Ascending aorta (tissue), 2 donors: ENCODE measurements at regions of chr6 and their contacts with region 1.

Region 1: DNA sequence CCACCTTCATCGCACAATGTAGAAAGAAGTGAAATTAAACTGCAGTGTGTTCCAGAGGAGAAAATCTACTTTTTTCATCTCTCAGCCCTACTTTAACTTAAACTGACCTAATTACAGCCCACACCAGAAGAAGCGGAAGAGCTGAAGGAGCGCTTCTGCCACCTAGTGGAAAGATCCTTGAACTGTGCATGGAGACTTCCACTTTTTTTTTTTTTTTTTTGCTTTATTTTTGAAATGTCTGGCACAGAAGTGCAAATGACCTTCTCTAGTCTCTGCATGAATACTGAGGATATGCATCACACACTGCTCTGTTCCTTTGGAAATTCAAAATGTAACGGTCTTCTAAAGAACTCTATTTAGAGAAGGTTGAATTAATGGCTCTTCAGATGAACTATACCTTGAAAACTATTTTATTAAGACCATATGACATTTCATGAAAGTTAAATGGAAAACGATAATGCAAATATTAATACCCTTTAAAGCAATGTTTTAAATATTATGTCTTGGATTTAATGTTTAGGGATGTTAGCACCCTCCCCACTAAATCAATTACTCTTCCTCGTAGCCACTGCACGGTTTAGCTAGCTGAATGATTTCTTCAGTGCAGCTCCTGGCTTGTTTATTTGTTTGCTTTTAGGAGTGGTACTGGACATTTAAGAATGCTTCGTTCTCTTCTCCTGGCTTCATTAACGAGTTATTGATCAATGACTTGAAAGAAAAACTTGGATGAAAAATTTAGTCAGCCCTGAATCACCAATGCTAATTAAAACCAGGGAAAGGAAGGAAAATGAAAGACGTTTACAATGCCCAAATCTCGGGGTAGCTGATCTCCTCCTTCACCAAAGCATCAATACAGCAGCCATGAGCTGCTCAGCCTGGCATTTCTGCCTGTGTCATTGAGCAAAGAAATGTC is 569.6 kb upstream of the GJE1 start:
- DNase-seq: peak in 1 of 2 donors; percentile 77
- H3K4me3 ChIP-seq: peak overlapping the region; percentile 45 to 46
- H3K27ac ChIP-seq: peak overlapping the region; percentile 67 to 68
- H3K4me1 ChIP-seq: peaks cover 0 to 3% of the 10 kb centered on the region in 2 donors
- H3K27me3 ChIP-seq: no peaks in the 10 kb centered on the region
- CTCF ChIP-seq: peak; percentile 74 to 90 (median 85)

Region 2: GRCh38 chr6:140988780-140989179 is 574.3 kb before region 1 on chr6:
- intact Hi-C with region 1: loop called (anchors 5 kb)
- DNase-seq: no peak
- H3K4me3 ChIP-seq: no peak overlapping the region
- H3K27ac ChIP-seq: peak overlapping the region; percentile 58 to 71
- H3K4me1 ChIP-seq: peaks cover 13 to 36% of the 10 kb centered on the region in 2 donors
- H3K27me3 ChIP-seq: no peaks in the 10 kb centered on the region
- CTCF ChIP-seq: no peak

Region 3: DNA sequence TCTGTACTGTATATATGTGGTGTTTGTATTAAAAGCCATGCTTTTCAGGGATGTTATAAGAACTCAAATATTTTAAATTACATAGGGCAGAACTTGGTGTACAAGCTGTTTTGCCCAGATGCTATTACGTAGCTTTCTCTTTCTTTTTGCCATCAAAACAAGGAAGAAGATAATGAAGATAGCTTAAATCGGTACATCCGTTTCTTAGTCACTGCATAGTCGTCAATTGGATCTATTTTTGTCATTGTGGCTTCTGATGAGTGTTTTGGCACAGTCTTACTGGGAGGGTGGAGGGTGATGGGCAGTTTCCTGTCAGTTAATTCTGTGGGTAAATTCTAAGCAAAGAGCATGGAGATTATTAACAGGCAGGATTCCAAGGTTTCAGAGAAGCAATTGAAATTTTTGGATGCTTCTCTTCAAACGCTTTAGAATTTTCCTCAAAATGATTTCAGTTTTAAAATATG is 79.5 kb before region 1 on chr6:
- intact Hi-C with region 1: no loop called
- DNase-seq: peak in 1 of 2 donors; percentile 70
- H3K4me3 ChIP-seq: peak overlapping the region; percentile 7 to 51
- H3K27ac ChIP-seq: peak overlapping the region; percentile 1 to 19
- H3K4me1 ChIP-seq: no peaks in the 10 kb centered on the region
- H3K27me3 ChIP-seq: no peaks in the 10 kb centered on the region
- CTCF ChIP-seq: no peak